ENCODE measurements at regions of chr1 and their contacts with region 1.

Region 1: DNA sequence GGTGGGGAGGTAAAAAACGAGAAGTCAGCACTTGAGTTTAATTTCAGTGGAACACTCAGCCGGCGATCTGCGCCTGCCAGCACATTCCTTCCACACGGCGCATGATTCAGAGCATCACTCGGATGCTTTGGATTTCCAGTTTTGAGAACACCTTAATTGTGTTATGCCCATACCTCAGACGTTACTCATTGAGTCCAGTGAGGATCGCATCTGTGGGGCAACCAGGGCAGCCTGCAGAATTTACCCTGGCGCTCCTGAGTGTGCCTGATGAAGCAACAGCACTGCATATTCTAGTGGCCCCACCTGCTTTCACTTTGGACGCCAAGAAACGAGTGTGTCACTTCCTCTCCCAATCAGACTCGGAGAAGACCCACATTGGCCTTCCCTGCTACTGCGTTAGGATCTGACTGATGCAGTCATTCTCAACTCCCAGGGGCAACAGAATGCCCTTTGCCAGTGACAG is 19.9 kb downstream of the FAM89A start:
- DNase-seq: no peak
- ATAC-seq: no peak
- H3K4me3 ChIP-seq: no peak overlapping the region
- H3K27ac ChIP-seq: no peak overlapping the region
- H3K4me1 ChIP-seq: no peaks in the 10 kb centered on the region; a peak in 1 of 5 replicates
- H3K27me3 ChIP-seq: no peaks in the 10 kb centered on the region
- CTCF ChIP-seq: no peak
- EP300 ChIP-seq: no peak
- POLR2A ChIP-seq: no peak
- RAD21 ChIP-seq: no peak

Region 2: DNA sequence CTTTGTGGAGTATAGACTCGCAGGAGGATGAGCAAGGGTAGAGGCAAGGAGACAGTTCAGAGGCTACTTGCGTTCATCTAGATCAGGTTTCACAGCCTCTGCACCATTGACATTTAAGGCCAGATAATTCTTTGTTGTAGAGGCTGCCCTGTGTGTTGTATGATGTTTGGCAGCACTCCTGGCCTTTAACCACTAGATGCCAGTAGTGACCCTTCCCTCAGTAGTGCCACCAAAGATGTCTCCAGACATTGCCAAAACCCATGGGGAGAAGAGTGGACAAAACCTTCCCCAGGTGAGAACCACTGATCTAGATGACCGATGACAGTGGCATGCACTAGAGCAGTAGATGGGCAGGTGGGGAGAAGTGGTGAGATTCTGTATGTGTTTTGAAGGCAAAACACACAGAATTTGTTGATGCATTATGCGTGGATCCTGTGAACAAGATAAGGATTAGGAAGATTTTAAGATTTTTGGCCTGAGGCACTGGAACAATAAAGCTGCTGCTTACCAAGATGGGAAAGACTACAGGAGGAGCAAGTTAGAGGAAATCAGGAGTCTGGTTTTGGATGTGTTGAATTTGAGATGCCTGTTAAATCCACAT is 387.8 kb before region 1 on chr1:
- CTCF ChIA-PET with region 1: no interaction called
- POLR2A ChIA-PET with region 1: no interaction called
- in situ Hi-C with region 1: no loop called
- intact Hi-C with region 1: loop called (anchors 5 kb)
- DNase-seq: peak in 2 of 4 experiments; percentile 24 to 47
- ATAC-seq: peak; percentile 91
- H3K4me3 ChIP-seq: no peak overlapping the region
- H3K27ac ChIP-seq: no peak overlapping the region
- H3K4me1 ChIP-seq: no peaks in the 10 kb centered on the region
- H3K27me3 ChIP-seq: peaks cover 4 to 12% of the 10 kb centered on the region in 2 experiments; a peak in 3 of 5 replicates
- CTCF ChIP-seq: peak; percentile 62 to 78 (median 70)
- EP300 ChIP-seq: no peak
- POLR2A ChIP-seq: no peak
- RAD21 ChIP-seq: peak; percentile 60 to 77

Region 3: DNA sequence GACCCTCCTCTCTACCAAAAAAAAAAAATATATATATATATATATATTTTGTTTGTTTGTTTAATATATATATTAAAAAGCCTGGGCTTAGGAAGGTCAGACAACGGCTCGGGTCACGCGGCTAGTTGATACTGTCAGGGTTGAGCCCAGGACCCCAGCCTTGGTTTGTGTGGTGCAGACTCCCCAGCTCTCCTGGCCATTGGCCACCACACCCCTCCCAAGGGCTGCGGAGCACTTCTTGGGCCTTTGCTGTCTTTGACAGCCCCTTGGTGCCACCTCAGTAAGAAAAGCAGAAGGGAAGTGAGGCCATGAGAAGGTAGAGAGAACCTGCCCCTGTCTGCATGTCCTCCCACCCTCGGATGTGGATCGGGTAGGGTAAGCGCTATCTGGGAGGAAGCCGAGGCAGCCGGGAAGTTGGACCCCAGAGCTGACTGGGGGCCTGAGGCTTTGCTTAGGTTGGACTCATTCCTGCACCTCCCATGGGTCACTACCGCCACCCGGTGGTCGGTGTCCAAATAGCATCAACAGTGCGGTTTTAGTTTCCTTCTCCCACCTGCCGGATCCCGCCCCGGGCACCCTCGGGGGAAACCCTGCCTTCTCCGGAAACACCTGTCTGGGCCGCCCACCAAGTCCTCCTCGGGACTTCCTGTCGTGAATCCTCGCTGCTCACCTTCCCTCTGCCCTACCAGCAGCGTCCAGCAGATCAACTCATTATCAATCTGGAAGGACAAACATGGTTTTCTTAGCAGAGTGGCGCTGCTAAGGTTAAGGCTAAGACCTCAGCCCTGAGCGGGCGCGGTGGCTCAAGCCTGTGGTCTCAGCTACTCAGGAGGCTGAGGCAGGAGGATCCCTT is 191.1 kb after region 1 on chr1:
- CTCF ChIA-PET with region 1: no interaction called
- POLR2A ChIA-PET with region 1: interaction called, 7 read pairs
- in situ Hi-C with region 1: no loop called
- intact Hi-C with region 1: loop called (anchors 1 kb)
- DNase-seq: peak; percentile 86 to 92 (median 90)
- ATAC-seq: peak; percentile 93
- H3K4me3 ChIP-seq: peak overlapping the region; percentile 32
- H3K27ac ChIP-seq: no peak overlapping the region
- H3K4me1 ChIP-seq: peaks cover 0 to 17% of the 10 kb centered on the region in 2 experiments; a peak in 3 of 5 replicates
- H3K27me3 ChIP-seq: peaks cover 10 to 18% of the 10 kb centered on the region in 2 experiments; a peak in 3 of 5 replicates
- CTCF ChIP-seq: peak; percentile 94 to 98 (median 98)
- EP300 ChIP-seq: no peak
- POLR2A ChIP-seq: no peak
- RAD21 ChIP-seq: peak; percentile 99

Measured in K562 (cell line).